ENCODE measurements at regions of chr14 and their contacts with region 1.

Region 1: GRCh38 chr14:101774006-101774795 is 12.7 kb downstream of the PPP2R5C start:
- DNase-seq: no peak
- H3K4me3 ChIP-seq: no peak overlapping the region
- H3K27ac ChIP-seq: no peak overlapping the region
- H3K4me1 ChIP-seq: peaks cover 0 to 20% (median 7%) of the 10 kb centered on the region in 4 donors
- H3K27me3 ChIP-seq: no peaks in the 10 kb centered on the region
- CTCF ChIP-seq: no peak
- EP300 ChIP-seq: no peak
- POLR2A ChIP-seq: no peak

Region 2: GRCh38 chr14:101083564-101084435 is 690.4 kb before region 1 on chr14:
- intact Hi-C with region 1: no loop called
- DNase-seq: no peak
- H3K4me3 ChIP-seq: no peak overlapping the region
- H3K27ac ChIP-seq: no peak overlapping the region
- H3K4me1 ChIP-seq: no peaks in the 10 kb centered on the region
- H3K27me3 ChIP-seq: peaks cover 0 to 4% (median under 1%) of the 10 kb centered on the region in 3 donors
- CTCF ChIP-seq: no peak
- EP300 ChIP-seq: no peak
- POLR2A ChIP-seq: no peak

Region 3: GRCh38 chr14:101839236-101839635 is 65.0 kb after region 1 on chr14:
- intact Hi-C with region 1: loop called (anchors 5 kb)
- DNase-seq: no peak
- H3K4me3 ChIP-seq: no peak overlapping the region
- H3K27ac ChIP-seq: peak overlapping the region in 2 of 4 donors; percentile 75 to 86
- H3K4me1 ChIP-seq: peaks cover 0 to 76% (median 66%) of the 10 kb centered on the region in 4 donors
- H3K27me3 ChIP-seq: no peaks in the 10 kb centered on the region
- CTCF ChIP-seq: no peak
- EP300 ChIP-seq: no peak
- POLR2A ChIP-seq: no peak

Region 4: DNA sequence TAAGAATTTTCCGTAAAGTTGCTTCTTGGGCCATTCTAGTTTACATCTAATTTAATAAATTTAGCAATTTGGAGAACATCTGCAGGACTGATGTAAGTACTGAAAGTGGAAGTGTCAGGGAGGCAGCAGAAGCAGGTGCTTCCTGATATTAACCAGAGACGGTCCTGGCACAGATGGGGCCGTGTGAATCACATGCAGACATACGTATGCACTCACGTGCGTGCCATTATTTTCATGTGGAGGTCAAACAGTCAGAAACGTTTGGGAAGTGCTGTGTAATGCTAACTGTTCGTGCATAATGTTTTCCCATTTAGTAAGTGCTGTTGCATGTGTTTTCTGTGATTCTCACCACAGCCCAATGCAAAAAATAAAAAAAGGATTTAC is 102.3 kb after region 1 on chr14:
- intact Hi-C with region 1: loop called (anchors 5 kb)
- DNase-seq: peak; percentile 95
- H3K4me3 ChIP-seq: peak overlapping the region in 1 of 4 donors; percentile 3
- H3K27ac ChIP-seq: peak overlapping the region; percentile 15 to 85 (median 76)
- H3K4me1 ChIP-seq: peaks cover 0 to 77% (median 58%) of the 10 kb centered on the region in 4 donors
- H3K27me3 ChIP-seq: no peaks in the 10 kb centered on the region
- CTCF ChIP-seq: no peak
- EP300 ChIP-seq: peak; percentile 97 to 100 (median 98)
- POLR2A ChIP-seq: no peak

Region 5: GRCh38 chr14:101927859-101928258 is 153.7 kb after region 1 on chr14:
- intact Hi-C with region 1: loop called (anchors 5 kb)
- DNase-seq: peak; percentile 96
- H3K4me3 ChIP-seq: no peak overlapping the region
- H3K27ac ChIP-seq: peak overlapping the region; percentile 54 to 78 (median 74)
- H3K4me1 ChIP-seq: peaks cover 0 to 23% (median 14%) of the 10 kb centered on the region in 4 donors
- H3K27me3 ChIP-seq: no peaks in the 10 kb centered on the region
- CTCF ChIP-seq: no peak
- EP300 ChIP-seq: peak; percentile 46 to 92 (median 83)
- POLR2A ChIP-seq: no peak